ENCODE measurements at regions of chr17 and their contacts with region 1.

Region 1: GRCh38 chr17:58710936-58711775 is 18.8 kb downstream of the RAD51C start:
- DNase-seq: peak; percentile 27
- H3K4me3 ChIP-seq: no peak overlapping the region
- H3K27ac ChIP-seq: no peak overlapping the region
- H3K27me3 ChIP-seq: no peaks in the 10 kb centered on the region
- CTCF ChIP-seq: peak; percentile 75

Region 2: GRCh38 chr17:58666858-58667619 is 44.1 kb before region 1 on chr17:
- CTCF ChIA-PET with region 1: interaction called, 4 read pairs
- POLR2A ChIA-PET with region 1: interaction called, 11 read pairs
- DNase-seq: no peak
- H3K4me3 ChIP-seq: no peak overlapping the region
- H3K27ac ChIP-seq: no peak overlapping the region
- H3K27me3 ChIP-seq: no peaks in the 10 kb centered on the region
- CTCF ChIP-seq: no peak

Region 3: DNA sequence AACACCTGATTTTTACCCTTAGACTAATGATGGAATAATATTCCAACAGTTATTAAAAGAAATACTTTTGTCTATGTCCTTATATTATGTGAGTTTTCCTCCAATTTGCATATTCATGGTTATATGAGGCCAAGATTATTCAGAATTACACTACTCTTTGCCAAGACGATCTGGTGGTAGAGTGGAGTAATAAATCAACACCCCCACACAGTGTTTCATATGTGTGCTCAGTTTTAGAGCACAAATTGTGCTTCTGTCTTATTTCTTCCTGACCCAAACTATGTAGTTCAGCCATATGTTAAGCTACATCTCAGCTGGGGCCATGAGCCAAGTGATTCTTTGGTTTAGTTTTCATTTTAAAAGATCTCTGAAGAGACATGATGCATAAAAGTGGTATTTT is 17.6 kb after region 1 on chr17:
- CTCF ChIA-PET with region 1: interaction called, 19 read pairs
- POLR2A ChIA-PET with region 1: no interaction called
- DNase-seq: no peak
- H3K4me3 ChIP-seq: no peak overlapping the region
- H3K27ac ChIP-seq: no peak overlapping the region
- H3K27me3 ChIP-seq: no peaks in the 10 kb centered on the region
- CTCF ChIP-seq: no peak

Region 4: GRCh38 chr17:58774313-58774712 is 63.2 kb after region 1 on chr17:
- CTCF ChIA-PET with region 1: no interaction called
- POLR2A ChIA-PET with region 1: no interaction called
- DNase-seq: no peak
- H3K4me3 ChIP-seq: no peak overlapping the region
- H3K27ac ChIP-seq: no peak overlapping the region
- H3K27me3 ChIP-seq: no peaks in the 10 kb centered on the region
- CTCF ChIP-seq: no peak

Region 5: GRCh38 chr17:59004338-59005111 is 293.4 kb after region 1 on chr17:
- CTCF ChIA-PET with region 1: interaction called, 102 read pairs
- POLR2A ChIA-PET with region 1: interaction called, 8 read pairs
- DNase-seq: no peak
- H3K4me3 ChIP-seq: no peak overlapping the region
- H3K27ac ChIP-seq: no peak overlapping the region
- H3K27me3 ChIP-seq: no peaks in the 10 kb centered on the region
- CTCF ChIP-seq: peak; percentile 98

Region 6: DNA sequence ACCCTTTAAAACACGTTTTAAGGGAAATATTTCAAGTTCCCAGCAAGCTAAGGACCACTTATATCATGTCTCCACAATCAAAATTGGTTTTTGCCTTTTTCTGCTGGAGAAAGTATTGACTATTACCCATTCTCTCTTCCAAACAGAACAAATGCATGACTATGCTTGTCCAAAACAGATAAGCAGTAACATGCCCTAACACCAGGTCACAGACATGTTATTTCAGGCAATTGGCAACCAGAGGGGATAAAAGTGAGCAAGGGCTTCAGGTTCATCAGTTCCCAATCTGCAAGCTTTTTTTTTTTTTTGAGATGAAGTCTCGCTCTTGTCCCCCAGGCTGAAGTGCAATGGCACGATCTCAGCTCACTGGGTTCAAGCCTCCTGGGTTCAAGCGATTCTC is 428.8 kb after region 1 on chr17:
- CTCF ChIA-PET with region 1: no interaction called
- POLR2A ChIA-PET with region 1: interaction called, 10 read pairs
- DNase-seq: no peak
- H3K4me3 ChIP-seq: no peak overlapping the region
- H3K27ac ChIP-seq: no peak overlapping the region
- H3K27me3 ChIP-seq: no peaks in the 10 kb centered on the region
- CTCF ChIP-seq: no peak

Measured in AG04450 (cell line).